ENCODE measurements at regions of chr12 and their contacts with region 1.

Region 1: GRCh38 chr12:47742253-47742825 is 16.3 kb downstream of the RAPGEF3 start:
- DNase-seq: peak; percentile 66

Region 2: DNA sequence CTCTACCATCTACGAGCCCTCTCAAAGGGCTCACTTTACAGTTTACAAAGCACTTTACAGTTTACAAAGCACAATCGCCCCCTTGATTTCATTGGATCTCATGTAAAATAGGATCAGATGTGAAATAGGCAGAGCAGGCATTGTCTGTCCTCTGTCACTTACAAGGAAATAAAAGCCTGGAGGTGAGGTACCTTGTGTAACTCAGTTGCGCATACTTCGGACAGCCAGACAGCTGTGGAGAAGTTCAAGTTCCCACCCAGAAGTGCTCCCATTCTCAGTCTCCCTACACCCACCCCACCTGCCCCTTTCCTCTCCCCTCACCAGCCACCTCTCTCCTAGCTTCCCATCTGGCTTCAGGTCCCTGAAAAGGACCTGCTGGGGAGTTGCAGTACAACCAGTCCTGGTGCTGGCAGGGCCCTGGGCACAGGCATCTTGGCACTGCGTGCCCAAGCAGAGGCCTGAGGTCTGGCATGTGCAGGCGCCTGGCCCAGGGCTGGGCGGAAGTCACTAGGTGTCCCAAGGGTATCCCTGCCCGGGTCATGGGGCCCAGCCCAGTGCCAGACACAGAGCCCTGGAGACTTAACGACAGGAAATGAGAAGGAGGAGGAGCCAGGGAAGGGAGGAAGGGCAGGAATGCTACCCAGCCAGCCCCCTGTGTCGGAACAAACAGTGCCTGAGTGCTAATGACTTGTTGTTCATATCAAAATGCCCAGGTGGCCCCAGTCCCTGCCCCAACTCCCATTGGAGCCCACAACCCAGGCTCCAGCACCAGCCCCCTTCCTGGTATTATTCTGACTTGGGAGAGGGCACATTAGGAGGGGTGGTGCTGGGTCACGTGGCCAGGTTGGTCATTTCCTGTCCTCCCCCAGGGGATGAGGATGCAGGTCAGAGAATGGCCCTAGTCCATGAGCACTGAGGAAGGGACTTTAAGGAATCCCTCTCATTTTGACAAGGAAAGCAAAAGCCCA is 11.0 kb after region 1 on chr12:
- CTCF ChIA-PET with region 1: interaction called, 19 read pairs
- POLR2A ChIA-PET with region 1: interaction called, 3 read pairs
- DNase-seq: no peak

Region 3: GRCh38 chr12:47758834-47759690 is 16.7 kb after region 1 on chr12 and contains the start of gene RAPGEF3:
- CTCF ChIA-PET with region 1: interaction called, 19 read pairs
- POLR2A ChIA-PET with region 1: interaction called, 3 read pairs
- DNase-seq: peak; percentile 83

Region 4: DNA sequence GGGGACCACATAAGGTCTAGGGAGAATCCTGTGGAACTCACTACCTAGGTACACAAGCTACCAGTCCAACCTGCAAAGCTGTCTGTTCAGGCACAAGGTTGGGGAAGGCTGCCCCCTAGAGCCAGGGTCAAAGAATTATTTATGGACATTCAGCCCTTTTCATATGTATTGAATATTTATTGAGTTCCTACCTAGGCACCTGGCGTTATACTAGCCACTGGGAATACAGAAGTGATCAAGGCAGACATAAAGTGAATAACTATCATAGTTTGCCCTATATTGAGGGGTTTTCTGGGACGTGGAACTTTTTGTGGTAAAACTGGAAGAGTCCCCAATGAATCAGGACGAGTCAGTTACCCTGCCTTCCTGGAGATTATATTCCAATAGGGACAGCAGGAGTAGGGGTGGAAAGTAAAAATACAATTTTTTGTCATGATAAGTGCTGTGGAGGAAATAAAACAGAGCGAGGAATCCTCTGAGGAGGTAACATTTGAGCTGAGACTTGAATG is 24.9 kb after region 1 on chr12:
- CTCF ChIA-PET with region 1: interaction called, 85 read pairs
- POLR2A ChIA-PET with region 1: interaction called, 5 read pairs
- DNase-seq: peak; percentile 56

Region 5: GRCh38 chr12:47779301-47779942 is 37.1 kb after region 1 on chr12:
- CTCF ChIA-PET with region 1: interaction called, 40 read pairs
- POLR2A ChIA-PET with region 1: interaction called, 6 read pairs
- DNase-seq: peak; percentile 86